Panc1 (cell line): ENCODE measurements at regions of chr1 and their contacts with region 1.

Region 1: DNA sequence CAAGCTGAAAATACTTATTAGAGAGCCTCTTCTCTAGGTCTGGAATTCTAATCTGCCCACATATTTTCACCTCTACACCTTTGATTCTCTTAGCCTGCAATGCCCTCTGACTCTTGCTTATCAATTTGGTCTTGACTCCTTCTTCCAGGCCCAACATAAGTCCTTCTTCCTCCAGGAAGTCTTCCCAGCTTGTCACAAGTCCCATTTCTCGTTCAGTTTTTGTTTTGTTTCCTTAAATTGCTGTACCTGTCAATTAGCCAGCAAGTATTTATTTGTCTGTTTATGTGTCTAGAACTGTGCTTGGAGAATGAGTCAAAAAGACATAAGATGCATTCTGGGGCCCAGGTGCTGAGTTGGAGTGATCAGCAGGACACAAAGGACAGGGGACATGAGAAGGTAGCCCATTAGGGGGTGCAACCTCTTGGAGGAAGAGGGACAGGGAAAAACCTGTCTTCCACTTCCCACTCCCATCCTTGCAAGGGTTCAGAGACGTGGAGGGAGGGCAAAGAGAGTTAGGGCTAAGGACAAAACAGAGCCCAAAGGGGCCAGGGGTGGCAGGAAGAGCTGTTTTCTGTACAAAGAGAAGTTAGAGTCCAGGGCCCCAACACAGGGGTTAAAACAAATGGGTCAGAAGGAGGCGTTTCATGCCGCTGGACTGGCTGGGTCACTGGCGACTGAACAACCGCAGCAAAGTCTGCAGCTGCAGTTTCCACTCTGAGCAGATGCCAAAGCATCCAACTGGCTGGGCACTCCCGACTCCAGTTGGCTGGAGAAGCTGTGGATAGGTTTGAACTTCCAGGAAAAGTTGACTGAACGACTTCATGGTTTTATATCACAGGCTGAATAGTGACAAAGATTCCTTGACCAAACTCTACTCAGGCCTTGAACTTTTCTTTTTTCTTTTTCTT is 10.7 kb upstream of the CNR2 start:
- DNase-seq: no peak
- ATAC-seq: no peak
- H3K4me3 ChIP-seq: no peak overlapping the region
- H3K27ac ChIP-seq: no peak overlapping the region
- H3K4me1 ChIP-seq: no peaks in the 10 kb centered on the region
- H3K27me3 ChIP-seq: no peaks in the 10 kb centered on the region
- CTCF ChIP-seq: no peak

Region 2: GRCh38 chr1:23825076-23825761 is 98.6 kb before region 1 on chr1 and contains the start of gene HMGCL:
- CTCF ChIA-PET with region 1: no interaction called
- POLR2A ChIA-PET with region 1: interaction called, 14 read pairs
- in situ Hi-C with region 1: no loop called
- intact Hi-C with region 1: no loop called
- DNase-seq: no peak
- ATAC-seq: peak; percentile 98
- H3K4me3 ChIP-seq: peak within 1 kb of the TSS; percentile 87 to 99
- H3K27ac ChIP-seq: peak within 1 kb of the TSS; percentile 91
- H3K4me1 ChIP-seq: 0 out of 2 replicates have a peak, but pooled peaks cover 5% of the 10 kb centered on the region
- H3K27me3 ChIP-seq: no peaks in the 10 kb centered on the region
- CTCF ChIP-seq: no peak
- total RNA-seq, gene HMGCL: 30.8 TPM

Region 3: GRCh38 chr1:24003331-24003972 is 79.6 kb after region 1 on chr1:
- CTCF ChIA-PET with region 1: no interaction called
- POLR2A ChIA-PET with region 1: no interaction called
- in situ Hi-C with region 1: no loop called
- intact Hi-C with region 1: no loop called
- DNase-seq: no peak
- ATAC-seq: no peak
- H3K4me3 ChIP-seq: no peak overlapping the region
- H3K27ac ChIP-seq: peak overlapping the region; percentile 25; the same call in 1 of the 2 replicates
- H3K4me1 ChIP-seq: peaks cover 2% of the 10 kb centered on the region; the same call in 1 of the 2 replicates
- H3K27me3 ChIP-seq: no peaks in the 10 kb centered on the region
- CTCF ChIP-seq: no peak

Region 4: DNA sequence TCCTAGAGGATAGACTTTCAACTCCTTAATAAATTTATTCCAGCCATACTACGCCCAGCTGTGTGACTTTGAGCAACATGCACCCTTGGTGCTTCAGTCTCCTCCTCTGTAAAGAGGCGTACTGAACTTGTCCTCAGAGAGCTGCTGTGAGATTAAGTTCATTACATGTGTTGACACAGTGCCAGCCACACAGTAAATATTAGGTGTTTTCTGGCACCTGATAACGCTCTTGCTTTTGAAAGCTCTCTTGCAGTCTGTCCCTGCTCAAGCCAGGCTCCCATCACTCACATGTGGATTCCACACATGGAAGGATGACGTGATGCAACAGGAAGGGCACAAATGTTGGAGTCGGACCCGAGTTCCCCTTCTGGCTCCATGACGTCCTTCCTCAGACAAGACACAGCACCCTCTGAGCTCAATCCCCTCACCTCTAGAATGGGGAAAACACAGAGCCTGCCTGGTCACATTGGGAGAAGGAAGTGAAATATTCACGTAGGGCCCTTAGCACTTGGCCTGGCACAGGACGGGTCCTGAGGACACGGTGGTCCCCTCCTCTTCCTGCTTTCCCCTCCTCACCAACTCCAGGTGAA is 255.5 kb after region 1 on chr1:
- CTCF ChIA-PET with region 1: no interaction called
- POLR2A ChIA-PET with region 1: no interaction called
- in situ Hi-C with region 1: no loop called
- intact Hi-C with region 1: no loop called
- DNase-seq: no peak
- ATAC-seq: no peak
- H3K4me3 ChIP-seq: no peak overlapping the region
- H3K27ac ChIP-seq: no peak overlapping the region
- H3K4me1 ChIP-seq: no peaks in the 10 kb centered on the region
- H3K27me3 ChIP-seq: no peaks in the 10 kb centered on the region
- CTCF ChIP-seq: no peak